CD14-positive monocyte (primary cell): ENCODE measurements at regions of chr4 and their contacts with region 1.

Region 1: DNA sequence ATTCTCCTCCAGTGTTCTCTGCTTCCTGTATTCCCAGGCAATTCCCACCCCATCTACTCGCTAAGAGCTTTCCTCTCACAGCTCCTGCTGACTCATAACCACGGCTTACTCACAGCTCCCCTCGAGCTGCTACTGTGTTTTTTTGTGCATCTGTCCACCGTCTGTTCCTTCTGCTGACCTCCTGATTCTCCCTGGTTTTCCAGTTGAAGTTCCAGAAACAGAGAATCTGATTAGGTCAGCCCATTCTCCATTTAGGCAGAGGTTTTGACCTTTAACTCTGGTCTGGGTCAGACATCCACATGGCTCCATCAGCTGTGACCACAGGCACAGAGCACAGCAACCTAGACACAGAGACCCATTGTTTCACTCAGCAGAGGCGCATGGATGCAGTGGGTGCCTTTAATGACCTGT is 5.5 kb upstream of the SMIM20 start:
- DNase-seq: peak in 1 of 3 donors; percentile 44
- H3K4me3 ChIP-seq: no peak overlapping the region
- H3K4me3 Mint-ChIP-seq: no peak overlapping the region
- H3K27ac ChIP-seq: no peak overlapping the region
- H3K27ac Mint-ChIP-seq: no peak overlapping the region
- H3K4me1 ChIP-seq: peaks cover 7 to 8% of the 10 kb centered on the region in 2 donors
- H3K4me1 Mint-ChIP-seq: peaks cover 18% of the 10 kb centered on the region
- H3K27me3 ChIP-seq: no peaks in the 10 kb centered on the region
- H3K27me3 Mint-ChIP-seq: peaks cover 3 to 8% (median 6%) of the 10 kb centered on the region in 3 donors
- CTCF ChIP-seq: no peak

Region 2: DNA sequence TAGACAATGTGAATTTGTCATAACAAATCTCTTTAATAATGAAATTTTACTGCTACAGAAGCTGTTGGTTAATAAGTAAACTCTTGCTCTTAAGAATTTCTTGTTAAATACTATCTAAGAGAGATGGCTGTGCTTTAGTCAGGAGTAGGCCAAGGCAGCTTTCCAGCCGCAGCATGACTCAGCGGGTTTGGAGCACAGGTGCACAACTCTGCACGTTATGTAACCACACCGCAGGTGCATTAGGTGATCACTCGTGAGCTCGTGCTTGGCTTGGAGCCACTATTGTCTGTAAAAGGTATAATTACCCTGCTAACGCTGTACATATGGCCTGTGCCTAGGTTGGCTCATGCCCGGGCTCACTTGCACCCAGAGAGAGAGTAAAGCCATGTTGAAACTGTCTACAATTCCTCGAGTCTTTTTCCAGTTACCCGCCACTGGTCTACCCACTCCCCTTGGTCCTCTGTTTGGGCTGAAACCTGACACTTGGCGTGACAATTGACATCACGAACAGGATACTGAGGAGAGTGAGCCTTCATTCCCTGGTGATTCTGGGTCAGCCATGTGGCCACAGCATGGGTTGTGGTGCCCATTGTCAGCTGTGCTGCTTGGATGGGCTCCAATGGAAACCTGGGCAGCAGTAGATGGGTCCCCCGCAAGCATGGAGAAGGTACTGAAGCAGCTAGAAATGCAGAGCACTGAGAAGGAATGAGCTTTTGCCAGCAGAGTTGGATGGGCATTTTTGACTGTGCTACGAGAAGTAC is 549.8 kb before region 1 on chr4:
- intact Hi-C with region 1: no loop called
- DNase-seq: no peak
- H3K4me3 ChIP-seq: no peak overlapping the region
- H3K4me3 Mint-ChIP-seq: no peak overlapping the region
- H3K27ac ChIP-seq: no peak overlapping the region
- H3K27ac Mint-ChIP-seq: no peak overlapping the region
- H3K4me1 ChIP-seq: no peaks in the 10 kb centered on the region
- H3K4me1 Mint-ChIP-seq: no peaks in the 10 kb centered on the region
- H3K27me3 ChIP-seq: no peaks in the 10 kb centered on the region
- H3K27me3 Mint-ChIP-seq: no peaks in the 10 kb centered on the region
- CTCF ChIP-seq: no peak

Region 3: GRCh38 chr4:25823632-25824031 is 84.9 kb before region 1 on chr4:
- intact Hi-C with region 1: no loop called
- DNase-seq: no peak
- H3K4me3 ChIP-seq: no peak overlapping the region
- H3K4me3 Mint-ChIP-seq: no peak overlapping the region
- H3K27ac ChIP-seq: no peak overlapping the region
- H3K27ac Mint-ChIP-seq: no peak overlapping the region
- H3K4me1 ChIP-seq: no peaks in the 10 kb centered on the region
- H3K4me1 Mint-ChIP-seq: no peaks in the 10 kb centered on the region
- H3K27me3 ChIP-seq: no peaks in the 10 kb centered on the region
- H3K27me3 Mint-ChIP-seq: peaks cover 0 to 3% (median 0%) of the 10 kb centered on the region in 3 donors
- CTCF ChIP-seq: no peak

Region 4: DNA sequence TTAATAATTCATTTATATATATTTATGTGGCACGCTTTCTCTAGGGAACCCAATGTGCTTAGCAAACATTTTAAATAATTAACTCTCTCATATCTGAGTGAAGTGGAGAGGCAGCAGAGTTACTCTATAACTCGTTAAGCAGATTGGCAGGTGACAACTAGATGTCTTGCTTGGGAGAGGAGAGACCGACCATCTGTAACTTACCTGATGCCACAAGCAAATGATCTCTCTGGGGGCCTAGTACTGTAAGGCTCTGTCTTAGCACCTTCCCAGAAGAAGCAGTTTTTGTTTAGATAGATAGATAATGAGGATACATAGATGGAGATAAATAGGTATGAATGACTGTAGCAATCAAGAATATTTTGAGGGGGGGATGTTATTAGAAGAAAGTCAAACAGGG is 33.8 kb before region 1 on chr4:
- intact Hi-C with region 1: loop called in 1 of 2 experiments (anchors 5 kb)
- DNase-seq: no peak
- H3K4me3 ChIP-seq: no peak overlapping the region
- H3K4me3 Mint-ChIP-seq: no peak overlapping the region
- H3K27ac ChIP-seq: no peak overlapping the region
- H3K27ac Mint-ChIP-seq: no peak overlapping the region
- H3K4me1 ChIP-seq: peaks cover 14 to 18% of the 10 kb centered on the region in 2 donors
- H3K4me1 Mint-ChIP-seq: peaks cover 14% of the 10 kb centered on the region
- H3K27me3 ChIP-seq: no peaks in the 10 kb centered on the region
- H3K27me3 Mint-ChIP-seq: no peaks in the 10 kb centered on the region
- CTCF ChIP-seq: no peak

Region 5: GRCh38 chr4:26028793-26029567 is 120.5 kb after region 1 on chr4:
- intact Hi-C with region 1: no loop called
- DNase-seq: peak; percentile 43 to 63 (median 48)
- H3K4me3 ChIP-seq: no peak overlapping the region
- H3K4me3 Mint-ChIP-seq: peak overlapping the region; percentile 4 to 36
- H3K27ac ChIP-seq: no peak overlapping the region
- H3K27ac Mint-ChIP-seq: peak overlapping the region in 2 of 7 donors; percentile 8 to 62
- H3K4me1 ChIP-seq: no peaks in the 10 kb centered on the region
- H3K4me1 Mint-ChIP-seq: peaks cover 7% of the 10 kb centered on the region
- H3K27me3 ChIP-seq: peaks cover 4 to 17% of the 10 kb centered on the region in 2 donors
- H3K27me3 Mint-ChIP-seq: peaks cover 23 to 36% (median 35%) of the 10 kb centered on the region in 3 donors
- CTCF ChIP-seq: peak; percentile 76